AG04450 (cell line): ENCODE measurements at regions of chr9 and their contacts with region 1.

Region 1: DNA sequence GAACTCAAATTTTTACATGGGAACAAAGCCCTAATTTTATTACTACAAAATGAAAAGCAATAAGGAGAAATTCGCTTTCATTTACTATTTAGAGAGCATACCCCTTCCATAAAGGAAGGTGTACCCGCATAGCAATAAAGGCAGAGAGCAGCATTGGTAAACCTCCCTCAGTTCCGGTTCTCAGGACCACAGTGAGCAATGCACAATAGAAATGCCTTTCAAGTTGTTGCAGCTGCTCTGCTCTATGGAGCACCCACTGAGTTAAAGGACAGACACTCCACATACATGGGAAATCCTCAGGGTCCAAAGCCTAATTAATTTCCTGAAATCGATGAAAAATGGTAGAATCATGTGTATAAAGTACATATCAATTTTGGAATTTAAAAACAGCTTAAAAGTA is 89.9 kb upstream of the MPDZ start:
- DNase-seq: no peak
- H3K4me3 ChIP-seq: no peak overlapping the region
- H3K27ac ChIP-seq: no peak overlapping the region
- H3K27me3 ChIP-seq: no peaks in the 10 kb centered on the region
- CTCF ChIP-seq: no peak

Region 2: GRCh38 chr9:13351778-13352386 is 17.5 kb before region 1 on chr9:
- CTCF ChIA-PET with region 1: interaction called, 14 read pairs
- POLR2A ChIA-PET with region 1: no interaction called
- DNase-seq: peak; percentile 11
- H3K4me3 ChIP-seq: no peak overlapping the region
- H3K27ac ChIP-seq: no peak overlapping the region
- H3K27me3 ChIP-seq: no peaks in the 10 kb centered on the region
- CTCF ChIP-seq: peak; percentile 60

Region 3: GRCh38 chr9:13500034-13500433 is 130.6 kb after region 1 on chr9:
- CTCF ChIA-PET with region 1: no interaction called
- POLR2A ChIA-PET with region 1: no interaction called
- DNase-seq: no peak
- H3K4me3 ChIP-seq: no peak overlapping the region
- H3K27ac ChIP-seq: no peak overlapping the region
- H3K27me3 ChIP-seq: no peaks in the 10 kb centered on the region
- CTCF ChIP-seq: no peak

Region 4: GRCh38 chr9:13608451-13608850 is 239.0 kb after region 1 on chr9:
- CTCF ChIA-PET with region 1: no interaction called
- POLR2A ChIA-PET with region 1: no interaction called
- DNase-seq: no peak
- H3K4me3 ChIP-seq: no peak overlapping the region
- H3K27ac ChIP-seq: no peak overlapping the region
- H3K27me3 ChIP-seq: no peaks in the 10 kb centered on the region
- CTCF ChIP-seq: no peak